GM23248 (cell line): ENCODE measurements at regions of chr5 and their contacts with region 1.

Region 1: GRCh38 chr5:136249678-136250266 is 56.8 kb upstream of the SMIM32 start:
- DNase-seq: peak; percentile 81
- H3K4me3 ChIP-seq: no peak overlapping the region
- H3K27ac ChIP-seq: no peak overlapping the region
- H3K4me1 ChIP-seq: no peaks in the 10 kb centered on the region
- H3K27me3 ChIP-seq: peaks cover 48% of the 10 kb centered on the region

Region 2: DNA sequence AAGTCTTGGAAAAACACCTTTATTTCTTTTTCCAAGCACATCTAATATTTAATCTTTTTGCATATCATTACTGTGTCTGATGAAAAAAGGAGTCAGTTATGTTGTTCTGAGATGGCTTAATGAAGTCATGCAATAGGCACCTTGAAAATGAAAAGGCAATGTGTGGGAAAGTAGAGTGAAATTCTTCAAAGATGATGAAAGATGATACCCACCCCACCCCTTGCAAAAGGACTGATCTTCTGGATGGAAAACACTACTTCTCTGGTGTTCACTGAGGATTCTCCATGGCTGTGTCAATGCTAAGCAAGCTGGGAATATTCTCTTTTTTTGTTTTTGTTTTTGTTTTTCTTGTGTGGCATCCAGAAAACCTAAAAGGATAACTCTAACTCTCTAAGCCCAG is 163.4 kb after region 1 on chr5:
- in situ Hi-C with region 1: no loop called
- DNase-seq: no peak
- H3K4me3 ChIP-seq: no peak overlapping the region
- H3K27ac ChIP-seq: no peak overlapping the region
- H3K4me1 ChIP-seq: no peaks in the 10 kb centered on the region
- H3K27me3 ChIP-seq: peaks cover 12% of the 10 kb centered on the region; the same call in 1 of the 2 replicates

Region 3: GRCh38 chr5:136424835-136425584 is 175.2 kb after region 1 on chr5:
- in situ Hi-C with region 1: loop called (anchors 10 kb)
- DNase-seq: peak; percentile 79
- H3K4me3 ChIP-seq: no peak overlapping the region
- H3K27ac ChIP-seq: no peak overlapping the region
- H3K4me1 ChIP-seq: no peaks in the 10 kb centered on the region
- H3K27me3 ChIP-seq: peaks cover 12% of the 10 kb centered on the region; the same call in 1 of the 2 replicates

Region 4: DNA sequence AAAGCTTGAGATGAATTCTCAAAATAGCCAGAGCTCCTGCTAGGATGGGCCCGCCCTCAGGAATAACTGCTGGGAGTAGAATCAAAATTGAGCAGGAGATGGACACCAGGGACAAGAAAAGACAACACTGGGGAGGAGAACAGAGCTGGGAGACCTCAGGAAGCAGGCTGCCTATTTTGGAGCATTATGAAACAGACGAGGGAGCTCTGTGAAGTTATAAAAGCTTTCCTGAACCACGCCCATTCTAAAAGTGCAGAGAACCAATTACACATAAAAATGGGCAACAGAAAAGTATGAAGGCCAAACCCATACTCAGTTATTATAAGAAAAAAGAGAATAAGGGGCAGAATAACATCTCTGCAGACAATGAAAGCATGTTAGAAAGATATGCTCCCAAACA is 329.5 kb after region 1 on chr5:
- in situ Hi-C with region 1: no loop called
- DNase-seq: no peak
- H3K4me3 ChIP-seq: no peak overlapping the region
- H3K27ac ChIP-seq: no peak overlapping the region
- H3K4me1 ChIP-seq: no peaks in the 10 kb centered on the region
- H3K27me3 ChIP-seq: no peaks in the 10 kb centered on the region; the same call in 1 of the 2 replicates

Region 5: DNA sequence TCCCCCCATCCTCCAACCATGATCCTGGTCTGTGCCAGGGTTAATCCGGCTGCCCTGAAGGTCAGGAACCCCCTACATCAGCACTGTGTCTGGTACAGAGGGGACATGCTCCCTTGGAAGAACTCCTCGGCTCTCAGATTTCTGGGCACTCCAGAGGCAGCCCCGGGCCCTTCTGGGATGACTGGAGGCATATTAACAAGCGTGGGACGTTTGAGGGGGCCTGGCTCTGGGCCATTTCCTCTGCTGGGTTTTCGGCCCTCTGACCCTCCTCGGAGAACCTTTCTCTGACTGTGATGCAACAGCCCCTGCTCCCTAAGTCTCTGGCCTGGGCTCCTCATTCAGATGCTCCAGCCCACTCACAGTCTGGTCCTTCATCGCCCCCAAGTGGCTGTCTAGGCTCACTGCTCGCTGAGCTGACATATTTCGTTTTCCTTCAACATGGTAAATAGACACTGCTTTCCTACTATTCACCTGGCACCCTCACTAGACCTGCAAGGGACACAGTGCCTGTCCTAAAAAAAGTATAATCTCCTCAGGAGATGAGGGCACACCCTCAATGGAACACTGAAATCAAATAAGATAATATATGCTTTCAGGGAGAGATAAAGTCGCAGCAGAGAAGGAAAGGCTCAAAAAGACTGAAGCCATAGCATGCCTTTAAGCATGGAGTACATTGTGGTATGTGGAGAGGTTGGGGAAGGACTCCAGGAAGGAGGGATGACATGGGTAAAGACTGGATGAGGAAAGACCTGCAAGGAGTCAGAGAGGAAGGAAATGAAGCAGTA is 520.3 kb after region 1 on chr5:
- in situ Hi-C with region 1: loop called (anchors 5 kb)
- DNase-seq: peak; percentile 83
- H3K4me3 ChIP-seq: no peak overlapping the region
- H3K27ac ChIP-seq: no peak overlapping the region
- H3K4me1 ChIP-seq: no peaks in the 10 kb centered on the region
- H3K27me3 ChIP-seq: peaks cover 15% of the 10 kb centered on the region; the same call in 1 of the 2 replicates